Calu3 (cell line): ENCODE measurements at regions of chr1 and their contacts with region 1.

Region 1: GRCh38 chr1:182869241-182869666 is 30.1 kb downstream of the DHX9 start:
- DNase-seq: no peak
- H3K4me3 Mint-ChIP-seq: no peak overlapping the region
- H3K27ac Mint-ChIP-seq: no peak overlapping the region
- H3K4me1 Mint-ChIP-seq: no peaks in the 10 kb centered on the region
- H3K27me3 Mint-ChIP-seq: no peaks in the 10 kb centered on the region
- CTCF ChIP-seq: no peak

Region 2: DNA sequence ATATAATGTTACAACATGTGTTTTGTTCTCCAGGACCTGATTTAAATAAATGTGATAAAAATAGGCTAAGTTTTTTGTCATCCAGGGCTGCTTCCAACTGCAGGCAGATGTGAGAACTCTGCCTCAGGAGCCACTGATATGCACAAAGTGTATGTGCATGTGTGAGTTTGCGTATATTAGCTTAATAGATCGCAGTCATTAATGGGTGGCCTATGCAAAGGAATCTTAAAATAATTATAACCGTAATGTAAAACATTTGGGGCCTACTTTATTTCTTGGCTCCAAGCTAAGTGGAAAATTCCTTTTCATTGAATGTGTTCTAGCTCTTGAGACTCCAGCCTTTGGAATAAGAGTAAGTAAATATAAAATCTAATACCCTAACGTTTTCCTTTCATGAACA is 13.3 kb before region 1 on chr1:
- CTCF ChIA-PET with region 1: no interaction called
- intact Hi-C with region 1: loop called (anchors 2 kb)
- DNase-seq: no peak
- H3K4me3 Mint-ChIP-seq: no peak overlapping the region
- H3K27ac Mint-ChIP-seq: no peak overlapping the region
- H3K4me1 Mint-ChIP-seq: no peaks in the 10 kb centered on the region
- H3K27me3 Mint-ChIP-seq: no peaks in the 10 kb centered on the region
- CTCF ChIP-seq: no peak

Region 3: DNA sequence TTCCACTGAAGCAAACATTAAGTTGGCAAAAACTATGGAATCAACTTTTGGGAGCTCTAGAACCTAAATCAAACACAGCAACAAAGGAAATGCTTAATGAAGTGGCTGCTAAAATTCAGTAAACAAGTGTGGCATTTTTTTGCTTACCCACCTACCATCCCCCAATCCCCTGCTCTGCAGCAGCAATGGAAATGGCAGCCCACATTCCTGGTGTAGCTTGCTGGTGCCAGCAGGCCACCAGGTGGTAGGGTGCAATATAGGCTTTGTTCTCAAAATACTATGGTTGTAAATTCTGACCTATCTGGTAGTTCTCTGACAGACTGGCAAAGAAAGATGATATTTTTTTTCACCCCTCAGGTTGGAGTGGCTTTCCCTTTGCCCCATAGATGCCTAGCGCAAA is 40.9 kb after region 1 on chr1:
- CTCF ChIA-PET with region 1: no interaction called
- intact Hi-C with region 1: no loop called
- DNase-seq: no peak
- H3K4me3 Mint-ChIP-seq: no peak overlapping the region
- H3K27ac Mint-ChIP-seq: no peak overlapping the region
- H3K4me1 Mint-ChIP-seq: peaks cover 13% of the 10 kb centered on the region
- H3K27me3 Mint-ChIP-seq: no peaks in the 10 kb centered on the region
- CTCF ChIP-seq: no peak